CD8-positive, alpha-beta T cell (primary cell): ENCODE measurements at regions of chr15 and their contacts with region 1.

Region 1: GRCh38 chr15:63626955-63627354 is 29.8 kb downstream of the FBXL22 start:
- DNase-seq: no peak
- ATAC-seq: no peak
- H3K4me3 ChIP-seq: no peak overlapping the region
- H3K4me3 Mint-ChIP-seq: no peak overlapping the region
- H3K27ac ChIP-seq: no peak overlapping the region
- H3K27ac Mint-ChIP-seq: no peak overlapping the region
- H3K4me1 ChIP-seq: no peaks in the 10 kb centered on the region
- H3K4me1 Mint-ChIP-seq: no peaks in the 10 kb centered on the region
- H3K27me3 ChIP-seq: no peaks in the 10 kb centered on the region
- H3K27me3 Mint-ChIP-seq: no peaks in the 10 kb centered on the region
- CTCF ChIP-seq: no peak

Region 2: GRCh38 chr15:63487076-63487757 is 139.7 kb before region 1 on chr15:
- CTCF ChIA-PET with region 1: no interaction called
- POLR2A ChIA-PET with region 1: no interaction called
- intact Hi-C with region 1: no loop called
- DNase-seq: peak; percentile 83 to 95 (median 88)
- ATAC-seq: peak; percentile 97
- H3K4me3 ChIP-seq: no peak overlapping the region
- H3K4me3 Mint-ChIP-seq: peak overlapping the region; percentile 40
- H3K27ac ChIP-seq: no peak overlapping the region
- H3K27ac Mint-ChIP-seq: peak overlapping the region; percentile 80
- H3K4me1 ChIP-seq: peaks cover 48% of the 10 kb centered on the region
- H3K4me1 Mint-ChIP-seq: peaks cover 62% of the 10 kb centered on the region
- H3K27me3 ChIP-seq: no peaks in the 10 kb centered on the region
- H3K27me3 Mint-ChIP-seq: no peaks in the 10 kb centered on the region
- CTCF ChIP-seq: peak; percentile 98

Region 3: DNA sequence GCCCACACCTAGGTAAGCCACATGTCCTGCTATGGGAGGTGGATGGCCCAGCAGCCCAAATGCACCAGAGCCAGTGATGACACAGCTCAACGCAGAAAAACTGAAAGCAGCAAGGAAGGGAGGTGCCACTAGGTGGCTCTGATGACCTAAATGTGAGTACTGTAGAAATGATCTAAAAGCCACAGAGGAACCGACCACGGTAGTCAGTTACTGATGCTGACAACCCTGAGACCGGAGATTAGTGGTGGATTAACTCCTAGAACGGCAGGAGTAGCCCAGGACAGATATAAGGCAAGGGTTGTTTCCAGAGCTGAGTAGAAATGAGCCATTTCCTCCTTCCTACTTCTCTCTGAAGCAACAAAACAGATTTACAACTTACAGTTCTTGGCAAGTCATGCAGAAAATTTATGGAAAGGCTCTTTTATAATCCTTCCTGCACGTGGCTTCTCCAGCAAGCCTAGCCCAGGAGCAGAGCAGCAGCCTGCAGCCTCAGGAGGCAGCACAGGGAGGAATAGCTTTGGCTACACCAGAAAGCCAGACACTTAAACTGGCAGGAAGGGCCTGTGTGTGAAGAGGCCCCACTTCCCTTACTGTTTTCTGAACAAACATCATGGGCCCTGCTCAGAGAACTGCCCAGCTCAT is 16.6 kb before region 1 on chr15:
- CTCF ChIA-PET with region 1: interaction called, 11 read pairs
- POLR2A ChIA-PET with region 1: no interaction called
- intact Hi-C with region 1: no loop called
- DNase-seq: peak; percentile 49 to 87 (median 75)
- ATAC-seq: peak; percentile 89
- H3K4me3 ChIP-seq: no peak overlapping the region
- H3K4me3 Mint-ChIP-seq: no peak overlapping the region
- H3K27ac ChIP-seq: peak overlapping the region; percentile 4 to 68
- H3K27ac Mint-ChIP-seq: peak overlapping the region; percentile 82
- H3K4me1 ChIP-seq: peaks cover 27% of the 10 kb centered on the region
- H3K4me1 Mint-ChIP-seq: peaks cover 36% of the 10 kb centered on the region
- H3K27me3 ChIP-seq: no peaks in the 10 kb centered on the region
- H3K27me3 Mint-ChIP-seq: no peaks in the 10 kb centered on the region
- CTCF ChIP-seq: peak; percentile 77